ENCODE measurements at regions of chr2 and their contacts with region 1.

Region 1: DNA sequence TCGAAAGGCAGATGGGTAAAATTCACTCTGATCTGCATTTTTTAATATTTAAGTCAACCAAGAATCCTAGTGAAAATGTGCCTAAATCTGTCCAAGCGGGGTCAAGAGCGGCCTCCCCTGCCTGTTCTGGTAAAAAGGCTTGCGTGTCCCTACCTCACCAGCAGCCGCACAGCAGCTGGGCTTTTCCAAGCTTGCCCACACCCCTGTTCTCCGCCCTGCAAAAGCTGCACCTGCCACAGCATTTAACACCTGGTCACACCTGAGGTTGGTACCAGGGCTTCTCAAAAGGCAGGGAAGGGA is 25.8 kb upstream of the TMEM182 start:
- DNase-seq: no peak
- ATAC-seq: peak; percentile 72
- H3K4me3 ChIP-seq: peak overlapping the region; percentile 84 to 93
- H3K27ac ChIP-seq: peak overlapping the region; percentile 89
- H3K4me1 ChIP-seq: peaks cover 13% of the 10 kb centered on the region
- H3K27me3 ChIP-seq: no peaks in the 10 kb centered on the region
- CTCF ChIP-seq: no peak

Region 2: DNA sequence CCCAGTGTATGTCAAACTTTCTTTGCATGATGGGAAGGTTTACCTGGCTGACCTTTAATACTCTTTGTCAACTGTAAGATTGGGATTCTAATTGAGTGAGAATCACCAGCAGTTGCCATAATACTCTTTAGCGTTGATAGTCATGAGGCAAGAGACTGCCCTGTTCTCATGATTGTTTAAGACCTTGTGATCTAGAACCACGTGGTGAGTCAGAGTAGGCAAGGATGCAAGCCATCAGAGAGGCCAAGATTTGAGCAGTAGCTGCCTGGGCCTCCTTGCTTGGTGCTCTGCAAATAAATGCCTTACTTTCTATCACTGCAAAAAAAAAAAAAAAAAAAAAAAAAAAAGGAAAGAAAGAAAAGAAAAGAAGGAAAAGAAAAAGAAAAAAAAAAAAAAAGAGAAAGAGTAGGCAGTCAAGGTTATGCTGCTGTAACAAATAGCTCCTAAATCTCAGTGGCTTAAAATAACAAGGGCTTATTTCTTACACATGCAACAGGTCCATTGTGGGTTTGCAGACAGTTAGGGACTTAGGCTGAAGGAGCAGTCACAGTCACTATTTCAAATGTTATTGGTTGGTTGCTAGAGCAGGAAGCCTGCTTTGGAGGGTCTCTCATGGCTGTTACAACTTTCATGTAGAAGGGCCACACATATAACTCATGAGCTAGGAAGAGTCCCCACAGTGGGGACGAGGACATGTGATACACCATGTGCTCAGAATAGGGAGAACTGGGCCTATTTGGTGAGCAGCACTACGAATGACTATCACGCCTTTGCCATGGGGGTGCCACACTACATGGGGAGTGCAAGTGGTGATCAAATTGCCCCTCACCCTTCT is 722.6 kb before region 1 on chr2:
- CTCF ChIA-PET with region 1: no interaction called
- POLR2A ChIA-PET with region 1: interaction called, 10 read pairs
- in situ Hi-C with region 1: no loop called
- intact Hi-C with region 1: no loop called
- DNase-seq: no peak
- ATAC-seq: no peak
- H3K4me3 ChIP-seq: no peak overlapping the region
- H3K27ac ChIP-seq: no peak overlapping the region
- H3K4me1 ChIP-seq: no peaks in the 10 kb centered on the region
- H3K27me3 ChIP-seq: no peaks in the 10 kb centered on the region
- CTCF ChIP-seq: no peak